ENCODE measurements at regions of chr9 and their contacts with region 1.

Region 1: GRCh38 chr9:89505911-89506310 is 8.0 kb upstream of the SEMA4D start:
- DNase-seq: no peak
- ATAC-seq: no peak
- H3K4me3 Mint-ChIP-seq: no peak overlapping the region
- H3K27ac Mint-ChIP-seq: peak overlapping the region; percentile 64
- H3K4me1 Mint-ChIP-seq: peaks cover 77% of the 10 kb centered on the region
- H3K27me3 Mint-ChIP-seq: no peaks in the 10 kb centered on the region
- CTCF ChIP-seq: no peak

Region 2: GRCh38 chr9:89489548-89490530 is 16.1 kb before region 1 on chr9:
- CTCF ChIA-PET with region 1: no interaction called
- POLR2A ChIA-PET with region 1: interaction called, 4 read pairs
- intact Hi-C with region 1: loop called (anchors 2 kb)
- DNase-seq: no peak
- ATAC-seq: peak; percentile 68
- H3K4me3 Mint-ChIP-seq: peak overlapping the region; percentile 46
- H3K27ac Mint-ChIP-seq: peak overlapping the region; percentile 80
- H3K4me1 Mint-ChIP-seq: peaks cover 92% of the 10 kb centered on the region
- H3K27me3 Mint-ChIP-seq: no peaks in the 10 kb centered on the region
- CTCF ChIP-seq: no peak

Measured in activated B cell treated with CpG ODN at 0.5 μM for 24 hours (primary cell).